Activated B cell treated with CpG ODN at 0.5 μM for 24 hours (primary cell): ENCODE measurements at regions of chr11 and their contacts with region 1.

Region 1: DNA sequence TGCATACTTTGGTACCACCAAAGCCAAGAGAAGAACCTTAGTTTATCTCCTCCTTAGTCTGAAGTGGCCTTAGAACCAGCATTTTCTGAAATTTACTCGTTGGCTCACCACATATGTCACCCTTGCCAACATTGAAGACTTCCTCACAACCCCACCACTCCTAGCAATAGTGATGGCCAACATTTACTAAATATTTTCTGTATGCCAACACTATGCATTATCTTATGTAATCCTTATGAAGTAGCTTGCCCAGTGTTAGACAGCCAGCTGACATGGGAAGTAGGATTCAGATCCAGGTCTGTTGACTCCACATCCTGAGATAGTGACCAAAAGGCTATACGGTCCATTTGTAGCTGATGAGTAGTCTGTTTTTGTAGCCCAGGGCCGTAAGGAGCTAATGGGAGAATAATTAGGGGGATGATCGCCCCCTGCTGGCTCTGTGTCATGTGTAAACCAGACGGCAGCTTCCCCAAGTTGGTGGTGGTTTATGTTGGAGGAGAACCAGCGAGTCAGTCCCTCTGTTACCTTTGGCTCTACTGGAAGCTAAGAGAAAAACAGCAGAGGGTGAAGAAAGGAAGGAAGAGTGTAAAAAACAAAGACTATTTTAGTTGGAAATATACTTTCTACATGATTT is 120.5 kb upstream of the RASSF10 start:
- DNase-seq: no peak
- ATAC-seq: no peak
- H3K4me3 Mint-ChIP-seq: no peak overlapping the region
- H3K27ac Mint-ChIP-seq: no peak overlapping the region
- H3K4me1 Mint-ChIP-seq: no peaks in the 10 kb centered on the region
- H3K27me3 Mint-ChIP-seq: peaks cover 2% of the 10 kb centered on the region
- CTCF ChIP-seq: no peak

Region 2: DNA sequence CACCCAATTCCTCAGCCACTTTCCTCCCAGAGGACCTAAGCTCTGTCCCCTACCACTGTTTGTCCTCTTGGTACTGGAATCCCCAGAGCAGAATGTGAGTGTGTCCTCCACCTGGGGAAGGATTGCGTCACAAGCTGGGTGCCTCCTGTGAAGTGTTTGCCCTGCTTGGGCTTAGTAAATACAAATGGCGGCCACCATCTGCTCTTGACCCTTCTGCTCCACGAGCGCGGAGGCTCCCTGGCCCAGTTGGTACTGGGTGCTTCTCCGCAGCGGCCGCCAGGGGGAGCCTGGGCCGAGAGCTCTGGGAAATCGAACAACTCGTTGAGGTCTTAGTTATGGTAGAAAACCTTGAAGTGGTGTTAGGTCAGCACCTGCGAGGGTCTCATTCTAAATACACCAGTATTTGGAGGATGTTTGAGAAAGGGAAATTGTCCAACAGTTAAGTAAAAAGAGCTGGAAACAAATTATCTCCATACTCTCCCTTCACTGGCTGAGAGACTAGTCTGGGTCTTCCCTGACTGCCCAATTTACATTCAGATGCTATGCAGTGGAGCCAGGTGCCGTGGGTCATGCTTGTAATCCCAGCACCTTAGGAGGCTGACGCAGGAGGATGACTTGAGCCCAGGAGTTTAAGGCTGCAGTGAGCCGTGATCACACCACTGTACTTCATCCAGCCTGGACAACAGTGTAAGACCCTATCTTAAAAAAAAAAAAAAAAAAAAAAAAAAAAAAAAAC is 289.1 kb before region 1 on chr11:
- CTCF ChIA-PET with region 1: no interaction called
- POLR2A ChIA-PET with region 1: no interaction called
- intact Hi-C with region 1: loop called (anchors 2 kb)
- DNase-seq: no peak
- ATAC-seq: no peak
- H3K4me3 Mint-ChIP-seq: no peak overlapping the region
- H3K27ac Mint-ChIP-seq: no peak overlapping the region
- H3K4me1 Mint-ChIP-seq: no peaks in the 10 kb centered on the region
- H3K27me3 Mint-ChIP-seq: no peaks in the 10 kb centered on the region
- CTCF ChIP-seq: peak; percentile 43

Region 3: DNA sequence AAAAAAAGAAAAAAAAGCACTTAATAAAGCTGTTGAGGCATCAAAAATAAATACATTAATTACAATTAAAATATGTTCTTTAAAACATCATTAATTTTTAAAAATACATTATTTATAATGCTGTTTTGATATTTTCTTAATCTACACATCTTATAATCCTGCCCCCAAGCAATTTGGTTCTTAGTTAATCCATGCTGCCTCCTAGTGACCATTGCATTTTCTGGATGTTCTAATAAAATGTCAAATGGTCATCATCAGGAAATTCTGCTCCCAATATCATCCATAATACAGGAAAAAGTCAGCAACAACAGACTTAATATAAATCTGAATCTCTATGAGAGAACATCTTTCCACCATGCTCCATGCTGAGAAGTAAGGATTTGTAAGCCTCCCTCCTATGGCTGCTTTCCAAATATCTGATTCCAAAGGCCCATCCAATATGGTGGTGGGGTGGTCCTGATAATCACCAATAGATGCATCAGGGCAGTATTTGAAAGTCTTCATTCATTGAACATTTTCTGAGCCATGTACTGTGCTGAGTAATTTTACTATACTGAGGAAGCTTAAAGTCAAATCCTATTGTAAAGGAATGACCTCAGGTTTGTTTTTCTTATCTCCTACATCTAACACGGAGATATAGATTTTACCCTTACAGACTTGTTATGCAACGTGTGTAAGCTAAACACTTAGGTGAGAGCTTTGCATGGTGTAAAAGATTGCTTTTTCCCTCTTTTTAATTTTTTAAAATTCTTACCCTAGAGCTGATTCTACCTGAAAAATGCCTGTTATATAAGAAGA is 264.3 kb after region 1 on chr11:
- CTCF ChIA-PET with region 1: no interaction called
- POLR2A ChIA-PET with region 1: no interaction called
- intact Hi-C with region 1: no loop called
- DNase-seq: no peak
- ATAC-seq: no peak
- H3K4me3 Mint-ChIP-seq: no peak overlapping the region
- H3K27ac Mint-ChIP-seq: no peak overlapping the region
- H3K4me1 Mint-ChIP-seq: no peaks in the 10 kb centered on the region
- H3K27me3 Mint-ChIP-seq: peaks cover 5% of the 10 kb centered on the region
- CTCF ChIP-seq: no peak